CD8-positive, alpha-beta T cell (primary cell): ENCODE measurements at regions of chr10 and their contacts with region 1.

Region 1: GRCh38 chr10:91220194-91220953 is at the start of gene PCGF5:
- DNase-seq: peak; percentile 87 to 97 (median 91)
- ATAC-seq: peak; percentile 94
- H3K4me3 ChIP-seq: peak within 1 kb of the TSS; percentile 66 to 80
- H3K4me3 Mint-ChIP-seq: peak within 1 kb of the TSS; percentile 89
- H3K27ac ChIP-seq: peak within 1 kb of the TSS; percentile 74 to 76
- H3K27ac Mint-ChIP-seq: peak within 1 kb of the TSS; percentile 91
- H3K4me1 ChIP-seq: peaks cover 32% of the 10 kb centered on the region
- H3K4me1 Mint-ChIP-seq: peaks cover 51% of the 10 kb centered on the region
- H3K27me3 ChIP-seq: no peaks in the 10 kb centered on the region
- H3K27me3 Mint-ChIP-seq: no peaks in the 10 kb centered on the region
- CTCF ChIP-seq: no peak
- total RNA-seq, gene PCGF5: 67.5 to 70.7 TPM

Region 2: GRCh38 chr10:91034494-91035159 is 185.7 kb before region 1 on chr10:
- CTCF ChIA-PET with region 1: no interaction called
- POLR2A ChIA-PET with region 1: no interaction called
- intact Hi-C with region 1: loop called in 1 of 2 experiments (anchors 1 kb)
- DNase-seq: no peak
- ATAC-seq: no peak
- H3K4me3 ChIP-seq: no peak overlapping the region
- H3K4me3 Mint-ChIP-seq: peak overlapping the region; percentile 40
- H3K27ac ChIP-seq: peak overlapping the region; percentile 3 to 54
- H3K27ac Mint-ChIP-seq: peak overlapping the region; percentile 83
- H3K4me1 ChIP-seq: peaks cover 17% of the 10 kb centered on the region
- H3K4me1 Mint-ChIP-seq: peaks cover 27% of the 10 kb centered on the region
- H3K27me3 ChIP-seq: no peaks in the 10 kb centered on the region
- H3K27me3 Mint-ChIP-seq: no peaks in the 10 kb centered on the region
- CTCF ChIP-seq: no peak

Region 3: DNA sequence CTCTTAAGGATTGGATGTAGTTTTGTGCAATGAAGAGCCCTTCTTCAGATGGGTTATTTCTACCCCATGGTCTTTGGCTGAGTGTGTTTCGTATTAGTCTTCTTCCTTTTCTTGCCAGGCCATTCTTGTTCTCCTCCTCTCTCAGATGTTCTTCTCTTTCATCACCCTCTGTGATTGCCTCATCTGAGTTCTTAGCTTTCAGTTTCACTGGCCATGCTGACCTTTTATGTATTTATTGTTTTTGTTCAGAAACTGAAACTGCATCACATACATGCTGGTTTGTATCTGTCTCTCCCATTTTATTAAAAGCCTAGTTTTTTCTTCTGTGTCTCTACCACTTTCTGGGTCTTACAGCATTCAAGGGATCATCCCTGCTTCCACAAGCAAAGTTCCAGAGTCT is 21.6 kb before region 1 on chr10:
- CTCF ChIA-PET with region 1: no interaction called
- POLR2A ChIA-PET with region 1: interaction called, 4 read pairs
- intact Hi-C with region 1: loop called (anchors 2 kb)
- DNase-seq: peak in 2 of 9 experiments; percentile 52 to 72
- ATAC-seq: peak; percentile 47
- H3K4me3 ChIP-seq: no peak overlapping the region
- H3K4me3 Mint-ChIP-seq: peak overlapping the region; percentile 13
- H3K27ac ChIP-seq: peak overlapping the region in 1 of 2 experiments; percentile 88
- H3K27ac Mint-ChIP-seq: peak overlapping the region; percentile 71
- H3K4me1 ChIP-seq: peaks cover 65% of the 10 kb centered on the region
- H3K4me1 Mint-ChIP-seq: peaks cover 84% of the 10 kb centered on the region
- H3K27me3 ChIP-seq: no peaks in the 10 kb centered on the region
- H3K27me3 Mint-ChIP-seq: no peaks in the 10 kb centered on the region
- CTCF ChIP-seq: no peak

Region 4: GRCh38 chr10:91242940-91243339 is 22.6 kb after region 1 on chr10:
- CTCF ChIA-PET with region 1: interaction called, 3 read pairs
- POLR2A ChIA-PET with region 1: no interaction called
- intact Hi-C with region 1: loop called (anchors 2 kb)
- DNase-seq: no peak
- ATAC-seq: no peak
- H3K4me3 ChIP-seq: no peak overlapping the region
- H3K4me3 Mint-ChIP-seq: no peak overlapping the region
- H3K27ac ChIP-seq: no peak overlapping the region
- H3K27ac Mint-ChIP-seq: peak overlapping the region; percentile 58
- H3K4me1 ChIP-seq: peaks cover 37% of the 10 kb centered on the region
- H3K4me1 Mint-ChIP-seq: peaks cover 24% of the 10 kb centered on the region
- H3K27me3 ChIP-seq: no peaks in the 10 kb centered on the region
- H3K27me3 Mint-ChIP-seq: no peaks in the 10 kb centered on the region
- CTCF ChIP-seq: no peak

Region 5: DNA sequence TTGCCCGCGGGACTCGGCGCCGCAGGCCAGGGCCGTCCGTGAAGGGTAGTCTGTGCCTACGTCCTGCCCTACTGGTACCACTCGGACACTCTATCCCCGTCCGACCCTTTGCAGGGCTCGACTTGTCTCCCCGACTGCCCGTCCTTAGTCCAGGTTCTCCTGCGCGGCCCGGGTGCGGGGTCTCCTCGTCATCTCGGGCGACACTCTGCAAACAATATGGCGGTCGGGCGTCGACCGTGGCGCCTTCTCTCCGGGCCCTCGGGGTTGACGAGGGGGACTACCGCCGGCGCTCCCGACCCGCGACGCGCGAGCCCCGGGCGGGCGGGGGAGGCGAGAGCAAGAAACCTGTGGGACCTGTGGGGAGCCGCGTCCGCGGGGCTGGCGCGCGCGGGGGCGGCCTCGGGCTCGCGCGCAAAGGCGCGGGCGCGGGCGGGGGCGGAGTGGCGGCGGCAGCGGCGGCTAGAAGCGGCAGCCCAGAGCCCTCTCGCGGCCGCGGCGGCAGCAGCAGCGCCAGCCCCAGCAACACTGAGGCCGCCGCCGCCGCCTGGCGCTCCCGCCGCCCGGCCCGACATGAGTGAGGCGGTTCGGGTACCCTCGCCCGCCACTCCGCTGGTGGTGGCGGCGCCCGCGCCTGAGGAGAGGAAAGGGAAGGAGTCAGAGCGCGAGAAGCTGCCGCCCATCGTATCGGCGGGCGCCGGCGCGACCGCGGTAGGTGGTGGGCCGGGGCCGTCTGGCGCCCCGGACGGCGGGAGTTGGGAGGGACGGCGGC is 189.7 kb after region 1 on chr10 and contains the start of gene HECTD2:
- CTCF ChIA-PET with region 1: no interaction called
- POLR2A ChIA-PET with region 1: no interaction called
- intact Hi-C with region 1: loop called (anchors 1 to 2 kb)
- DNase-seq: peak; percentile 65 to 92 (median 82)
- ATAC-seq: peak; percentile 86
- H3K4me3 ChIP-seq: peak within 1 kb of the TSS; percentile 91 to 97
- H3K4me3 Mint-ChIP-seq: peak within 1 kb of the TSS; percentile 86
- H3K27ac ChIP-seq: peak within 1 kb of the TSS; percentile 90 to 95
- H3K27ac Mint-ChIP-seq: peak within 1 kb of the TSS; percentile 90
- H3K4me1 ChIP-seq: peaks cover 12% of the 10 kb centered on the region
- H3K4me1 Mint-ChIP-seq: peaks cover 13% of the 10 kb centered on the region
- H3K27me3 ChIP-seq: no peaks in the 10 kb centered on the region
- H3K27me3 Mint-ChIP-seq: no peaks in the 10 kb centered on the region
- CTCF ChIP-seq: peak; percentile 41
- total RNA-seq, gene HECTD2: 0.69 to 1.5 TPM

Region 6: DNA sequence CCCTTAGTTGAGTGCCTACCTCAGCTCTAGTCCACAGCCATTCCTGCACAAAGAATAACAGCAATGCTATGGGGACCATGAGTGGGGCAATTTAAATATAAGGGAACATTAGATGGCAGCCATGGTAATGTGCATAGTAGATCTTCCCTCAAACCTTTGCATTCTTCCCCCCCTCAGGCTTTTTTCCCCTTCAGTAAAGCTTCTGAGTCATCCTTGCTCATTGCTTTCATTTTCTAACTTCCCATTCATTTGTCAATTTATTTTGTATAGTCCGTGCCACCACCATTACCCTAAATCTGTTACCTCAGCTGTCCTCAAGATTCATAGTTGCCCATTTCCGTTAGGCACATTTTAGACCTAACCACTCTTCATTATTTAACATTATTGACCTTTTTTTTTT is 200.5 kb after region 1 on chr10:
- CTCF ChIA-PET with region 1: no interaction called
- POLR2A ChIA-PET with region 1: no interaction called
- intact Hi-C with region 1: no loop called
- DNase-seq: no peak
- ATAC-seq: no peak
- H3K4me3 ChIP-seq: no peak overlapping the region
- H3K4me3 Mint-ChIP-seq: no peak overlapping the region
- H3K27ac ChIP-seq: no peak overlapping the region
- H3K27ac Mint-ChIP-seq: no peak overlapping the region
- H3K4me1 ChIP-seq: no peaks in the 10 kb centered on the region
- H3K4me1 Mint-ChIP-seq: peaks cover 5% of the 10 kb centered on the region
- H3K27me3 ChIP-seq: no peaks in the 10 kb centered on the region
- H3K27me3 Mint-ChIP-seq: no peaks in the 10 kb centered on the region
- CTCF ChIP-seq: no peak

Region 7: DNA sequence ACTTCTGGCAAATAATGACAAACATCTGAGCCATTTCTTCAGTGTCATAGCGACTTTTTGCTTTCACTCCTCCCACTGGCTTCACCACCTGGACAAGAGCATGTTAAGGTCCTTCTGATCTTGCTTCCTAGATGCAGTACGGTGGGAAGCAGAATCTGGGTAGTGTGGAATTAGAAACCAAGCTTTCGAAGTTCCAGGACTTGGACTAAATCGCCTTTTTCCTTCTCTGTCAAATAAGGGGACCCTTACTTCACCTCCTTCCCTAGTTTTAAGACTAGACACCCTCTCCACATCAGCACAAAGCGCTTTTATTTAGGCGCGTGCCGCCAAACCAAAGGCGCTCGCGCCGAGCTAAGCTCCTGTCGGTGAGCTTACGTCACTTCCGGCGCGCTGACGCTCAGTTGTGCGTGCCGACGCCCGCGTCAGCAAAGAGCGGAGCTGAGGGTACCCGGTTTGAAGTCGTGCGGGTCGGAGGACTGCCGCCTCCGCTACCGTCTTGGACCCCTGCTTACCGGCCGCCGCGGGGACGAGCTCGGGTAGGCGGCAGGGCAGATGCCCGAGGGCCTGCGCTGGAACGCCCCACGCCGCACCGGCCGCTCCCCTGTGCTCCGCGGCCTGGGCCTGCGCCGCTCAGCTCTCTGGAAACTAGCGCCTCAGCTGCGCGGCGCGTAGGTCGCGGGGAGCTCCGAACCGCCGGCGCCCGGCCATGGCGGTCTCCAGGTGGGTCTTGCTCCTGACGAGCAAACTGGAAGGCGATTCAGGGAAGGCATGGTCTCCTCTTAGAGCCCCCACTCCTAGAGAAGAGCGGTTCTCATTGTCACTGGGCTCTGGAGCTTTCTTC is 703.2 kb after region 1 on chr10 and contains the start of gene BTAF1:
- CTCF ChIA-PET with region 1: no interaction called
- POLR2A ChIA-PET with region 1: no interaction called
- intact Hi-C with region 1: loop called in 1 of 2 experiments (anchors 10 kb)
- DNase-seq: peak; percentile 82 to 97 (median 93)
- ATAC-seq: peak; percentile 94
- H3K4me3 ChIP-seq: peak within 1 kb of the TSS; percentile 87 to 97
- H3K4me3 Mint-ChIP-seq: peak within 1 kb of the TSS; percentile 99
- H3K27ac ChIP-seq: peak within 1 kb of the TSS; percentile 92 to 97
- H3K27ac Mint-ChIP-seq: peak within 1 kb of the TSS; percentile 98
- H3K4me1 ChIP-seq: peaks cover 36% of the 10 kb centered on the region
- H3K4me1 Mint-ChIP-seq: peaks cover 50% of the 10 kb centered on the region
- H3K27me3 ChIP-seq: peaks cover 0 to 2% of the 10 kb centered on the region in 2 experiments
- H3K27me3 Mint-ChIP-seq: peaks cover 2% of the 10 kb centered on the region
- CTCF ChIP-seq: no peak
- total RNA-seq, gene BTAF1: 88.6 to 90.7 TPM